Esophagus muscularis mucosa (tissue), 4 donors: ENCODE measurements at regions of chr10 and their contacts with region 1.

Region 1: DNA sequence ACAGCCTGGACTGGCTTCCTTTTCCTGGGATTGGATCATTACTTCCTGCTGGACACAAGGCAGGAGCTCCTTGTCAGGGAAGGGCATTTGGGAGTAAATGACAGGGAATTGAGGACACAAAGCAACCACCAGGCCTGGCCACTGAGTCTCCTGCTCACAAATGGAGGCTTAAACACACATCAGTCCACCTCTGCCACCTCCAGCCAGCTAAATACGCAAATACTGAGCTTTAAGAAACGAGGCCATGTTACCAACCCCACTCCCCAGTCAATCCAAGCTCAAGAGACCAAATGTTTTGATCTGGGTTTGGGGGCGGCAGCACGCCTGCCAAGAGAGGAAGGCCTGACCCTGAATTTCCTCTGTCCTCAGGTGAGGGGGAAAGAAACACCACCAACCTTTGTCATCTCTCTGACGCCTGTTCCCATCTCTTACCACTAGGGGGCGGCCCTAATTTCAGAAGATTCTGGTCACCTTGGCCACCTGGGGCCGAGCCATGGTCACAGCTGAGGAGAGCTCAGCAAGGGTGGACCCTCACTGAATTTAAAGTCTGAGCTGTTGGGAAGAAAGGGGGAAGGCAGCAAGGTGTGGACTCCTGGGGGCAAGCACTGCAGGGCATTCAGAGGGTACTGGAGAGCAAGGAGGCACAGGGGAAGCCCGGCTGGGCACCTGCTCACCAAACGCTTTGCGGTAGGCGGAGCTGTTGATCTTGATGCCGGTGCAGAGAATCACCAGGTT is 16.5 kb downstream of the AIFM2 start:
- DNase-seq: no peak
- H3K4me3 ChIP-seq: no peak overlapping the region
- H3K27ac ChIP-seq: no peak overlapping the region
- H3K4me1 ChIP-seq: peaks cover 0 to 4% (median 2%) of the 10 kb centered on the region in 4 donors
- H3K27me3 ChIP-seq: no peaks in the 10 kb centered on the region
- CTCF ChIP-seq: peak; percentile 73 to 89 (median 77)
- EP300 ChIP-seq: no peak
- POLR2A ChIP-seq: no peak

Region 2: DNA sequence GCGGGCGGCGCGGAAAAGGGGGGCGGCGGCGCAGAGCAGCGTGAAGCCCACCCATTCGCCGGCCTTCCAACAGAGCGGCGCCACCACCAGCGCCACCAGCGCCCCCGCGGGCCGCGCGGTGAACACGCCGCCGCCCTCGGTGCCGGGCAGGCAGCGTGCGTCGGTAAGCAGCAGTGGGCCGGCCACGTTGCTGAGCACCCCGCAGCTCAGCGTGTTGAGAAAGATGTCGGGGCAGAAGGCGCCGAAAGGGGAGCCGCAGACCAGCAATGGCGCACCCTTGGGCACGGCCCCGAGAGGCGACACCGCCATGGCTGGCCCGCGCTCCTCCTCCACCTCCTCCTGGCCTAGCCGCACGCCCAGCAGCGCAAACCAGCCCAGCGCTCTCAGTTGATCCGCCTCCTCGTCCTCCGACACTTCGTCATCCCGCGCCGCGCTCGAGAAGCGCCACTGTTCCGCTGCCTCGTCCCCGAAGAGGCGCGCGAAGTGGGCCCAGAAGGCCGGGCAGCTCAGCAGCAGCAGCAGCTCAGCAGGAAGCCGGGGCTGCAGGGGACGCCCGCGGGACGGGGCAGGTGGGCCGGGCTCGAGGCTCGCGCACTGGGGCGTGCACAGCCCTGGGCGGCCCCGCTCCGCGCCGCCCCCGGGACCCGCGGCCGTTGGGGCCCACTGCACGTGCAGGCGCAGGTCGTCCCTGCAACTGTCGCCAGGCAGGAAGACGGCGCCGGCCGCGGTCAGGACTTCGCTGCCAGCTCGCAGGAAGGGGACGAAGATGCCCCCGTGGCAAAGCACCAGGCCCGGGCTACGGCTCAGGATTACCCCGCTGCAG is 29.8 kb after region 1 on chr10:
- intact Hi-C with region 1: loop called (anchors 2 kb)
- DNase-seq: no peak
- H3K4me3 ChIP-seq: peak overlapping the region; percentile 69 to 93 (median 76)
- H3K27ac ChIP-seq: peak overlapping the region; percentile 87 to 97 (median 88)
- H3K4me1 ChIP-seq: peaks cover 19 to 33% (median 26%) of the 10 kb centered on the region in 4 donors
- H3K27me3 ChIP-seq: no peaks in the 10 kb centered on the region
- CTCF ChIP-seq: peak; percentile 48 to 72 (median 48)
- EP300 ChIP-seq: no peak
- POLR2A ChIP-seq: no peak

Region 3: GRCh38 chr10:70363971-70364771 is 248.1 kb after region 1 on chr10:
- intact Hi-C with region 1: loop called (anchors 10 kb)
- DNase-seq: peak; percentile 98
- H3K4me3 ChIP-seq: peak overlapping the region; percentile 24 to 40 (median 26)
- H3K27ac ChIP-seq: peak overlapping the region; percentile 80 to 87 (median 87)
- H3K4me1 ChIP-seq: peaks cover 12 to 36% (median 32%) of the 10 kb centered on the region in 4 donors
- H3K27me3 ChIP-seq: no peaks in the 10 kb centered on the region
- CTCF ChIP-seq: peak; percentile 89 to 95 (median 92)
- EP300 ChIP-seq: no peak
- POLR2A ChIP-seq: no peak